Adrenal gland (tissue), 19 donors: ENCODE measurements at regions of chr10 and their contacts with region 1.

Region 1: DNA sequence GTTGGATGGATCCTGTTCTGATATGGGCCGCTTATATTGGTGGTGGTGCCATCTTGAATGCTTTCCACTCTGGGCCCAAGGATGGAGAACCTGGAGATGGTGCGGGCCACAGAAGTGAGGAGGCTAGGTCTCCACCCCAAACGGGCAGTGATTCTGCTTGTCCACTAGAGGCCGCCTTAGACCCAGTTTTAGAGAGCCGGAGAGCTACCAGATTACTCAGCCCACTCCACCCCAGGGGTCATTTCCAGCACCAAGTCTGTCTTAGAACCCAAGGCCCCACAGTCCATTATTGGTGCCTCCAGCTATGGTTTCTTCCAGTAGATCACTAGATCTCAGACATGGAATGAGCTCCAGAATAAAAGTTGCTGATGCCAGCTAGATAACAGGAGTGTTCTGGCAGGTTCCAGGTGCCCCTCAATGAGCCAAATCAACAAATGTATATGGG is 11.8 kb upstream of the CAMK2G start:
- DNase-seq: peak; percentile 74 to 88 (median 78)
- H3K4me3 ChIP-seq: no peak overlapping the region
- H3K27ac ChIP-seq: peak overlapping the region in 2 of 5 donors; percentile 66 to 83
- H3K4me1 ChIP-seq: peaks cover 25 to 31% of the 10 kb centered on the region in 2 donors
- H3K27me3 ChIP-seq: no peaks in the 10 kb centered on the region
- CTCF ChIP-seq: peak; percentile 71 to 92 (median 83)
- POLR2A ChIP-seq: no peak

Region 2: GRCh38 chr10:73940634-73941221 is 54.6 kb after region 1 on chr10:
- intact Hi-C with region 1: loop called (anchors 2 kb)
- DNase-seq: peak; percentile 69 to 90 (median 82)
- H3K4me3 ChIP-seq: no peak overlapping the region
- H3K27ac ChIP-seq: peak overlapping the region in 1 of 5 donors; percentile 57
- H3K4me1 ChIP-seq: peaks cover 6 to 9% of the 10 kb centered on the region in 2 donors
- H3K27me3 ChIP-seq: no peaks in the 10 kb centered on the region
- CTCF ChIP-seq: peak; percentile 83 to 97 (median 90)
- POLR2A ChIP-seq: no peak

Region 3: GRCh38 chr10:74081192-74081803 is 195.2 kb after region 1 on chr10:
- intact Hi-C with region 1: loop called (anchors 5 to 10 kb)
- DNase-seq: peak; percentile 24 to 68 (median 36)
- H3K4me3 ChIP-seq: no peak overlapping the region
- H3K27ac ChIP-seq: no peak overlapping the region
- H3K4me1 ChIP-seq: no peaks in the 10 kb centered on the region
- H3K27me3 ChIP-seq: no peaks in the 10 kb centered on the region
- CTCF ChIP-seq: peak; percentile 33 to 74 (median 66)
- POLR2A ChIP-seq: no peak